Calu3 (cell line): ENCODE measurements at regions of chr5 and their contacts with region 1.

Region 1: GRCh38 chr5:92916036-92916435 is 665.0 kb downstream of the NR2F1-AS1 start:
- DNase-seq: no peak
- H3K4me3 Mint-ChIP-seq: peak overlapping the region; percentile 40
- H3K27ac Mint-ChIP-seq: peak overlapping the region; percentile 92
- H3K4me1 Mint-ChIP-seq: peaks cover 55% of the 10 kb centered on the region
- H3K27me3 Mint-ChIP-seq: no peaks in the 10 kb centered on the region
- CTCF ChIP-seq: no peak

Region 2: GRCh38 chr5:92460505-92460904 is 455.5 kb before region 1 on chr5:
- CTCF ChIA-PET with region 1: no interaction called
- intact Hi-C with region 1: no loop called
- DNase-seq: no peak
- H3K4me3 Mint-ChIP-seq: no peak overlapping the region
- H3K27ac Mint-ChIP-seq: no peak overlapping the region
- H3K4me1 Mint-ChIP-seq: no peaks in the 10 kb centered on the region
- H3K27me3 Mint-ChIP-seq: no peaks in the 10 kb centered on the region
- CTCF ChIP-seq: no peak

Region 3: DNA sequence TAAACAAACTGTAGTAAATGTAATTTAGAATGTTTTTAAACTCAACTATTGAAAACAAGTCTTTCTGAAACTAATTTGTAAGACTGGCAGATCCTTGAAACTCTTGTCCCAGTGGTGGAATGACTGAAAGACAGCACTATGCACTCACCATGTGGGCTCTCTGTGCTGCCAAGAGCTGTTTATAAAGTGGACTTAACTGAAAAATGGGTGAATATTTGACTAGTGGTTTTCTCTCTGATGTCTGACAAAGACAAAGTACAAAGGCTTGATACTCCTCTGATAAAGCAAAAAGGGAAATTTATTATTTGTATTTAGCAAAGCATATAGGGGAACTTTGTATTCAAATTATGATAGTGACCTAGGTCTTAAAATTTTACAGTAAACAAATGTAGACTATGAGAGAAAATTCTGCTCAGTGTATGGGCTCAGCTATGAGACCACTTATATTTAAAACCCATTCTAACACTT is 29.6 kb after region 1 on chr5:
- CTCF ChIA-PET with region 1: no interaction called
- intact Hi-C with region 1: loop called (anchors 2 kb)
- DNase-seq: peak; percentile 44
- H3K4me3 Mint-ChIP-seq: peak overlapping the region; percentile 51
- H3K27ac Mint-ChIP-seq: peak overlapping the region; percentile 92
- H3K4me1 Mint-ChIP-seq: peaks cover 77% of the 10 kb centered on the region
- H3K27me3 Mint-ChIP-seq: no peaks in the 10 kb centered on the region
- CTCF ChIP-seq: no peak

Region 4: DNA sequence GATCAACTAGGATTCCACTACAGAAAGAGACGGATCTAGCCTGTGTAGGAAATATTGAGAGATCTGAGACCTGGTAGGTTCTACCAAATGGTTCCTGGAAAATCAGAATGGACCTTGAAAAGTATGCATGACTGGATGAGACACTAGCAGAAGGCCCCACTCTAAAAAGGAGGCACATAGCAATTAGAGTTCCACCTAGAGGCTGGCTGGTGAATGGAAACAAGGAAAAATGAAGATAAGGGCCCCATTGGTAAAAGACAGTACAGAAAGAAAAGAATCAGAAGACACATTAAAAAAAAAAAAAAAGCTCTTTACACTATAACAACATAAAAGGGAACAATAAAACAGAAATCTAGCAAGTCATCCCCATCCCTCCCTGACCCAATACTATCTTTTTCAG is 146.5 kb after region 1 on chr5:
- CTCF ChIA-PET with region 1: no interaction called
- intact Hi-C with region 1: loop called (anchors 5 kb)
- DNase-seq: no peak
- H3K4me3 Mint-ChIP-seq: no peak overlapping the region
- H3K27ac Mint-ChIP-seq: no peak overlapping the region
- H3K4me1 Mint-ChIP-seq: peaks cover 14% of the 10 kb centered on the region
- H3K27me3 Mint-ChIP-seq: no peaks in the 10 kb centered on the region
- CTCF ChIP-seq: peak; percentile 45

Region 5: DNA sequence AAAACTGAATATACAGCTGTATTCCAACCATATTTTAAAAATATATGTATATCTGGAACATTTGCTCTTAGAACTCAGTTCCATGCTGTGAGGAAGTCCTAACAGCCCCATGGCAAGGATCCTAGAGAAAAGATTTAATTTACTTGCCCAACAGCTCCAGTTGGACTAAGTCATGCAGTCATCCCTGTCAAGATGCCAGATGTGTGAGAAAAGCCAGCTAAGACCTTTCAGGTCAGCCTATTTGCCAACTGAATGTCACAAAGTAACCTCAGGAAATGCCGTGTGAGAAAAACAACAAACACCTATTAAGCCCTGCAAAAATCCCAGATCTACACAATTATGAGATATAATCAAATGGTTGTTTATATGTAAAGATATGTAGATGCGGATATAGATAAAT is 248.7 kb after region 1 on chr5:
- CTCF ChIA-PET with region 1: no interaction called
- intact Hi-C with region 1: loop called (anchors 2 kb)
- DNase-seq: peak; percentile 24
- H3K4me3 Mint-ChIP-seq: no peak overlapping the region
- H3K27ac Mint-ChIP-seq: no peak overlapping the region
- H3K4me1 Mint-ChIP-seq: peaks cover 24% of the 10 kb centered on the region
- H3K27me3 Mint-ChIP-seq: no peaks in the 10 kb centered on the region
- CTCF ChIP-seq: no peak

Region 6: GRCh38 chr5:93249651-93250289 is 333.7 kb after region 1 on chr5:
- CTCF ChIA-PET with region 1: no interaction called
- intact Hi-C with region 1: loop called (anchors 1 kb)
- DNase-seq: peak; percentile 33
- H3K4me3 Mint-ChIP-seq: peak overlapping the region; percentile 65
- H3K27ac Mint-ChIP-seq: peak overlapping the region; percentile 9
- H3K4me1 Mint-ChIP-seq: no peaks in the 10 kb centered on the region
- H3K27me3 Mint-ChIP-seq: no peaks in the 10 kb centered on the region
- CTCF ChIP-seq: no peak

Region 7: GRCh38 chr5:93582677-93583438 is 666.8 kb after region 1 on chr5 and contains the start of gene NR2F1:
- CTCF ChIA-PET with region 1: no interaction called
- intact Hi-C with region 1: loop called (anchors 2 kb)
- DNase-seq: peak; percentile 88
- H3K4me3 Mint-ChIP-seq: no peak within 1 kb of the TSS
- H3K27ac Mint-ChIP-seq: no peak within 1 kb of the TSS
- H3K4me1 Mint-ChIP-seq: no peaks in the 10 kb centered on the region
- H3K27me3 Mint-ChIP-seq: no peaks in the 10 kb centered on the region
- CTCF ChIP-seq: no peak
- total RNA-seq, gene NR2F1: 25.1 and 29.1 TPM in 2 replicates